Activated T-helper 1 cell treated with anti-CD3 and anti-CD28 coated beads, Interleukin-12 subunit alpha, Interleukin-12 subunit beta, Interleukin-2, Interleukin-4 antibody, amounts not matched to agents 30 ng/mL and 10 ng/mL and 1 ng/mL, durations not matched to agents 14 hours and 24 hours and 36 hours (primary cell): ENCODE measurements at regions of chr14 and their contacts with region 1.

Region 1: GRCh38 chr14:77097700-77098528 is at the start of gene CIPC:
- DNase-seq: peak; percentile 99
- H3K4me3 Mint-ChIP-seq: peak within 1 kb of the TSS; percentile 96
- H3K27ac Mint-ChIP-seq: peak within 1 kb of the TSS; percentile 97
- H3K4me1 Mint-ChIP-seq: peaks cover 40% of the 10 kb centered on the region
- H3K27me3 Mint-ChIP-seq: peaks cover 4% of the 10 kb centered on the region
- total RNA-seq, gene CIPC: 10.3 and 11.5 TPM in 2 replicates

Region 2: DNA sequence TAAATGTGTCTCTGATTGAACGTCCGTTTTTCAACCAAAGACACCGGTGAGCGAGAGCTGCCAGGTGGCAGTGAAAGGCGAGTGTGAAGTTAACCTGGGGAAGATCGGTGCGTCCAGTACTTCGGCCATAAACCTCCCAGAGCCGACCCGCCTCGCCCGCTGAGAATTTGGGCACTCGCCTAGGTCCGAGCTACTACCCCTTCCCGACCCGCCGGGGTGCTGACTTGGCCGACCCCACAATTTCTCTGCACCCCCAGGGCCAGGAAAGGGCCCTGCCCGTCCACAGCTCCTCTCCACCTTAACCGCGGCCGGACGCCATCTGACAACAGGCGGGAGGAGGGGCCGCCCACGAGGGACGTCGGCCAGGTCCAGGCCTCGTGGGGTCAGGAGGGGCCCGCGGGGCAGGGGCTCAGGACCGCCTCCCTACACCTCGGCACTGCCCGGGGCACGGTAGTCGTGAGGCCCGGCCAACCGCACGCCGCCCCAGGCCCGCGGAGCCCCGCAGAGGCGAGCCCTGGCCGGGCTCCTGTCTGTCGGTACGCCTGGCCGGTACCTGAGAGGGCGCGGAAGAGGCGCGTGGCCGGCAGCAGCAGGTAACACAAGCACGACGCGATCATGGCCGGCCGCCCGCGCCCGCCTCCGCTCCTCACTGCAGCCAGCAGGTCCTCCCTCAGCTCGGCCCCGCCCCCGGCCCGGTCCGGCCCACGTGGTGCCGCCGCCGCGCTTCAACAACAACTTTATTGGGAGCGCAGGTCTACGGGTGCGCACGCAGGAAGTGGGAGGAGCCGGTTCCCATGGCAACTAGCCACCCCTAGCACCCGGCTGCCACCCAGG is 285.5 kb before region 1 on chr14 and contains the start of gene ANGEL1:
- intact Hi-C with region 1: loop called (anchors 1 kb)
- DNase-seq: peak; percentile 96
- H3K4me3 Mint-ChIP-seq: peak within 1 kb of the TSS; percentile 96
- H3K27ac Mint-ChIP-seq: peak within 1 kb of the TSS; percentile 95
- H3K4me1 Mint-ChIP-seq: peaks cover 23% of the 10 kb centered on the region
- H3K27me3 Mint-ChIP-seq: peaks cover 2% of the 10 kb centered on the region
- total RNA-seq, gene ANGEL1: 14.1 and 14.8 TPM in 2 replicates

Region 3: GRCh38 chr14:76918751-76919543 is 179.0 kb before region 1 on chr14:
- intact Hi-C with region 1: no loop called
- DNase-seq: no peak
- H3K4me3 Mint-ChIP-seq: no peak overlapping the region
- H3K27ac Mint-ChIP-seq: no peak overlapping the region
- H3K4me1 Mint-ChIP-seq: peaks cover 46% of the 10 kb centered on the region
- H3K27me3 Mint-ChIP-seq: no peaks in the 10 kb centered on the region

Region 4: DNA sequence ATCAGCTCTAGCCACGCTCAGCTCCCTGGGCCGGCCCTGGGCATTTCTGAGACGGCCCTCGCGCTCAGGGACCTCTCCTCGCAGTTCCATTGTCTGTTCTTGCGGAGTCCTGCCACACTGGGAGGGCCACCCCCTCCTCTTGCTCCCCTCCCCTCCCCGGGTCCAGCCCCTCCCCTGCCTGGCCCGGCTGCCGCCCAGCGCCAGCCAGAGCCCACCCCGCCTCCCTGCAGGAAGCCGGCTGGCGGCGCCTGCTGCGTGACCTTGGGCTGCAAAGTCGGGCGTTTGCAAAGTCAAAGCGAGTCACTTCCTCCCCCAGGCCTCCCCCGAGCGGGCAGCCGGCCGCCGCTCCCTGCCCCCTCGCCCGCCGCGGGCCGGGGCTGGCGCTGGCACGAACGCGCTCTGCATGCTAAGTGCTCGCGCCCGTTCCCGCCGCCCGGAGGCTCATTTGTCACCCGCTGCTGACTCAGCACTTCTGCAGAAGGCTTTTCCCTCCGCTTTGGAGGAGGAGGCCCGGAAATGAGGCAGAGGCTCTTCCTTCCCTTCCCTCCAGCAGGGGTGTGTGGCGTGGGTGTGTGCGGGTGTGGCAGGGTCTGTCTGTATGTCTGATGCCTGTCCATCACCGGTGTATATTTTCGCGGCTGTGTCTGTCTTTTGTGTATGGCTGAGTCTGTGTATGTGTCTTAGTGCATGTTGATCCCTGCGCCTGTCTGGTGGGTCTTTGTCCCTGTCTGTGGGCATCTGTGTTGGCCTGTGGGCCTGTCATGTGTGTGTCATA is 141.4 kb before region 1 on chr14:
- intact Hi-C with region 1: loop called (anchors 1 kb)
- DNase-seq: peak; percentile 85
- H3K4me3 Mint-ChIP-seq: peak overlapping the region; percentile 74
- H3K27ac Mint-ChIP-seq: peak overlapping the region; percentile 90
- H3K4me1 Mint-ChIP-seq: peaks cover 77% of the 10 kb centered on the region
- H3K27me3 Mint-ChIP-seq: no peaks in the 10 kb centered on the region

Region 5: DNA sequence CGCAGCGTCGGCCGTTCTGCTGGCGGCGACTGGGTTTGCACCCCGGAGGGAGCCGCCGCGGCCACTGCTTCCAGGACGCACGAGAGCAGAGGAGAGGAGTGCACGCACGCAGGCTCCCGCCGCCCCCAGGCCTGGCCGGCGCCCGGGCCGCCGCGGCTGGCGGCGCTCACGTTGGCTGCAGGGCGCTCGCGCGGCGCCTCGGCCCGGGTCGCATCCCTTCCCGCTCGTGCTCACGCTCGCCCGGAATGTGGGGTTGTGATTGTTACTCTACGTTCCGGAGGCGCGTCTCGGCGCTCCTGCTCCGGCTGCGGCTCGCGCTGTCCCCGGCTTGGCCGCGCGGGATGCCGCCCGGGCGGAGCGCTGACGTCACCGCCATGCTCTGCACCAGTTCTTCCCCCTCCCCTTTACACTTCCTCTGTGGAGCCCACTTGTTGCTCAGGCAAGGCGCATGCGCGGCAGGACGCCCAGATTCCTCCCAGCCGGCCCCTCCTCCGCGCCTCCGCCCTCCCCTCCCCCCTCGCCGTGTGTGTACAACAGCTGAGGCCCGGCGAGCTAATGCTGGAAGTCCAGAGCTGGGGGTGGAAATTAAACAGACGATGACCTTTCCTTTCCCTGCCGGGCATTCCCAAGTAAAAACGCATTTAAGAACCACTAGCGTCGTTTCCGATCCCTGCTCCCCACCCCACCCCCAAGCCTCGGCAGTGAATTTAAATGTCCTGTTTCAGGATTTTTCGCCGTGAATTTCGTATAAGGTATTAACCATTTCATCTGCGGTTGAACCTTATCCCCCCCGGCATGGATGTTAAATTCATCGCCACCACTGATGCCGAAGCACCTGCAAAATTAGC is 69.3 kb before region 1 on chr14 and contains the start of gene IRF2BPL:
- intact Hi-C with region 1: loop called (anchors 1 kb)
- DNase-seq: peak; percentile 91
- H3K4me3 Mint-ChIP-seq: peak within 1 kb of the TSS; percentile 94
- H3K27ac Mint-ChIP-seq: peak within 1 kb of the TSS; percentile 97
- H3K4me1 Mint-ChIP-seq: peaks cover 57% of the 10 kb centered on the region
- H3K27me3 Mint-ChIP-seq: no peaks in the 10 kb centered on the region
- total RNA-seq, gene IRF2BPL: 24.9 and 26.5 TPM in 2 replicates

Region 6: DNA sequence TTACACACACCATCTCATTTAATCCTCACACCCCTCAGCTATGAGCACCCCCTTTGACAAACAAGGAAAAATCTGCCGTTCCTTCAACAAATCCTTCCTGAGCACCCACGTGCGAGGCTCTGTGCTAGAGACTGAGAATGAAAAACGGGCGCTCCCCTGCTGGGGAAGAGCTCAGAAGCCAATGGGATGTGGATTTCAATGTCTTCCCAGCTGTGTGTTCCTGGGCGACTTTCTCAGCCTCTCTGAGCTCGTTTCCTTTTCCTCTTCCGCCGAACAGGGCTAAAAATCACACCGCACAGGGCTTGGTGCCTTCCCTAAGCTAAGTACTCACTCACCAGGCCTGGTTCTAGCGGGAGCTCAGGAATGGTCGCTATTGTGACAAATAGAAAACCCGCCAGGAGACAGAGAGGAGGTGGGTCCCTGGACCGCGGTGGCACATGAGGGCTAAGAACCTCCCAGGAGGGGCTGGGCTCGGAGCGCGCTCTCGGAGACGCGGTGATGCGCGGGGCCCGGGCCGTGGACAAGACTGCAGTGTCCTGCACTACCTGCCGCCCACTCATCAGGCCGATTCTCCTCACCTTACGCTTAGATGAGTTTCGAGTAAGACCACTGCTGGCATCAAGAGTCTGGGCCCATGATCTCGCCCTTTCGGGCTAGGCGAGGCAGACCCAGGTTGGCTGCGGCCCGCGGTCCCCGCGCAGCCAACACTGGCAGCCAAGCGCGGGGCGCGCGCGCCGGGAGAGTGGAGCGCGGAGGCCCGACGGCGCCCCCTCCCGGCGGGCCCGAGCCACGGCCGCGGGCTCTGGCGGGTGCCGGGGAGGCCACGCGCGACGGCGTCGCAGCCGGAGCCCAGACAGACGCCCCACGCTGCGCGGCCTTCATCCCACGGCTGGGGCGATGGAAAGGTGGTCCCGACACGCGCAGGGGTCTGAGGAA is 26.7 kb after region 1 on chr14:
- intact Hi-C with region 1: loop called (anchors 1 kb)
- DNase-seq: peak; percentile 62
- H3K4me3 Mint-ChIP-seq: peak overlapping the region; percentile 77
- H3K27ac Mint-ChIP-seq: no peak overlapping the region
- H3K4me1 Mint-ChIP-seq: peaks cover 22% of the 10 kb centered on the region
- H3K27me3 Mint-ChIP-seq: peaks cover 35% of the 10 kb centered on the region

Region 7: DNA sequence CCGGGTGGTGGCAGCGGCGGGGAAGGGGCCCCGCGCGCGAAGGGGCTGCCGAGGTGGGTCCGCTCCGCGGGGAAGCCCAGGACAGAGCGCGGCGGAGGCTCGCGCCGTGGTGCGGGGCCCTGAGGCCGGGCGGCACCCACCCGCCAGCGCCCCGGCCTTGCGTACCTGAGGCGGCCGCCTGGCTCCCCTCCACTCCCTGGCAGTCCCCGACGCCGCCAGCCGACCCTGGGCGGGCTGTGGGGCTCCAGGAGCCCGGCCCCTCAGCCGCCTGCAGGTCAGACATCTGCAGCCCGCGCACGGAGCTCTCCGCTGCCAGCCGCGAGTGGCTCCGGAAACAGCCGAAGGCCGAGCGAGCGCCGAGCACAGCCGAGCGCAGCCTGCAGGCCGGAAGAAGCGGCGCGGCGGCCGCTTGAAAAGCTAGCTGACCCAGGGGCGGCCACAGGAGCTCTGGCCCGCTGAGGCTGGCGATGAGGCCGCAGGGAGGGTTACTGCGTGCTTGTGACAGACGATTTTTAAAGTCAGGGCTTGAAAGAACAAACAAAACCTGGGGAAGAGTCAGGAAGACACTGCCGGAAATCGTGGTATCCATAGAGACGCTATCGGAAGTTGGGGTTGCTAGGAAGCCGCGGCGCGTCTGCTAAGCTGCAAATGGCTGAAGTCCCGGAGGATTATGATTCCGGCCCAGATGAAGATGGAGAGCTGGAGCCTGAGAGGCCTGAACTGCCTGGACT is 279.0 kb after region 1 on chr14 and contains the starts of genes SAMD15 and TMED8:
- intact Hi-C with region 1: loop called (anchors 2 kb)
- DNase-seq: peak; percentile 80
- H3K4me3 Mint-ChIP-seq: peak within 1 kb of the TSS; percentile 92
- H3K27ac Mint-ChIP-seq: peak within 1 kb of the TSS; percentile 89
- H3K4me1 Mint-ChIP-seq: peaks cover 37% of the 10 kb centered on the region
- H3K27me3 Mint-ChIP-seq: peaks cover 10% of the 10 kb centered on the region
- total RNA-seq, gene SAMD15: 0.29 and 1.1 TPM in 2 replicates
- total RNA-seq, gene TMED8: 28.1 and 28.4 TPM in 2 replicates

Region 8: GRCh38 chr14:77421201-77421600 is 323.3 kb after region 1 on chr14:
- intact Hi-C with region 1: no loop called
- DNase-seq: no peak
- H3K4me3 Mint-ChIP-seq: no peak overlapping the region
- H3K27ac Mint-ChIP-seq: no peak overlapping the region
- H3K4me1 Mint-ChIP-seq: no peaks in the 10 kb centered on the region
- H3K27me3 Mint-ChIP-seq: no peaks in the 10 kb centered on the region

Region 9: GRCh38 chr14:77707724-77708408 is 610.0 kb after region 1 on chr14 and contains the starts of genes ALKBH1 and SLIRP:
- intact Hi-C with region 1: loop called (anchors 1 kb)
- DNase-seq: peak; percentile 81
- H3K4me3 Mint-ChIP-seq: peak within 1 kb of the TSS; percentile 99
- H3K27ac Mint-ChIP-seq: peak within 1 kb of the TSS; percentile 98
- H3K4me1 Mint-ChIP-seq: peaks cover 41% of the 10 kb centered on the region
- H3K27me3 Mint-ChIP-seq: no peaks in the 10 kb centered on the region
- total RNA-seq, gene ALKBH1: 16.3 and 21.9 TPM in 2 replicates
- total RNA-seq, gene SLIRP: 177 and 178 TPM in 2 replicates